ENCODE measurements at regions of chr16 and their contacts with region 1.

Region 1: GRCh38 chr16:72425571-72426341 is 253.8 kb upstream of the PMFBP1 start:
- DNase-seq: peak; percentile 40 to 73 (median 62)
- H3K4me3 ChIP-seq: peak overlapping the region; percentile 25 to 76 (median 61)
- H3K27ac ChIP-seq: peak overlapping the region; percentile 70 to 99 (median 98)
- H3K27me3 ChIP-seq: peaks cover 0 to 5% (median 0%) of the 10 kb centered on the region in 45 donors
- CTCF ChIP-seq: peak in 5 of 56 donors; percentile 2 to 20 (median 14)

Region 2: DNA sequence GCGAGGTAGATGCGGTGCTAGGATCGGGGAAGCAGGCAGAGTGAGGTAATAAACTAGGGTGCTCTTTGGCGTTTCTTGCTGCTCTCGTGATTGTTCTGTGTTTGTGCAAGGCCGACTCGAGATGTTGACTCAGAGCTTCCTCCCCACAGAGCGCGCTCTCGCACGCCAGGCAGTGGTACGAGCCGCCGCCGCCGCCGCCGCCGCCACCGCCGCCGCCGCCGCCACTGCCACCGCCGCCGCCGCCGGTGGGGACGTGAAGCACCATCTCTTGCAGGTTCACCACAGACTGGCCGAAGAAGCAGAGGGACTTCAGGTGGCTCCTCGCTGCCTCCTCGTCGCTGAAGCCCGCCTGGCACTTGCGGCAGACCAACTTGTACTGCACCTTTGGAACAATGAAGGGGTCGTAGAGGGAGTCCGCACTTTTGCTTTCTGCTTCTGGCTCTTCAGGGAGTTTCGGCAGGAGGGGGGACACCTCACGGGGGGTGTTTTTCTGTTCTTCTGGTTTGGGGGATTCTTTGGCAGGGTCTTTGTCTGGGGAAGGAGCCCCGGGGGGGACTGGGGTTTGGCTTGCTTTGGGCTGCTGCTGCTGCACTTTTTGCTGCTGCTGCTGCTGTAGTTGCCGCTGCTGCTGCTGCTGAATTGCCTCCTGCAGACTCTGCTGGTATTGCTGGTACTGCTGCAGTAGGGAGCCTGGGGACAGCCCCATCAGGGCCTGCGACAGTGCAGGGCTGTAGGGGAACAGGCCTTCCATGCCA is 361.9 kb after region 1 on chr16:
- intact Hi-C with region 1: loop called in 1 of 2 experiments (anchors 10 kb)
- DNase-seq: peak in 9 of 10 donors; percentile 10 to 71 (median 57)
- H3K4me3 ChIP-seq: peak overlapping the region; percentile 35 to 76 (median 63)
- H3K27ac ChIP-seq: peak overlapping the region in 46 of 59 donors; percentile 6 to 84 (median 59)
- H3K27me3 ChIP-seq: no peaks in the 10 kb centered on the region
- CTCF ChIP-seq: peak in 2 of 56 donors; percentile 16 to 22